RWPE1 (cell line): ENCODE measurements at regions of chr12 and their contacts with region 1.

Region 1: DNA sequence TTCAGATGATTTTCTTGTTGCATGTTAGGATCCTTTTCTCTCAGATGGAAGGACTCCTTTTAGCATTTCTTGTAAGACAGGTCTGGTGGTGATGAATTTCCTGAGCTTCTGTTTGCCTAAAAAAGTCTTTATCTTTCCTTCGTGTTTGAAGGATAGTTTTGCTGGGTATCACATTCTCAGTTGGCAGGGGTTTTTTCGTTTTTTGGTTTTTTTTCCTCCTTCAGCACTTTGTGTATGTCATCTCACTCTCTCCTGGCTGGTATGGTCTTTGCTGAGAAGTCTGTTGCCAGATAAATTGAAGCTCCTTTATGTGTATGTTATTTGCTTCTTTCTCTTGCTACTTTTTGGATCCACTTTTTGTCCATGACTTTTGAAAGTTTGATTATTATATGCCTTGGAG is 15.6 kb upstream of the TXNRD1 start:
- DNase-seq: no peak
- H3K27ac ChIP-seq: no peak overlapping the region
- CTCF ChIP-seq: no peak

Region 2: GRCh38 chr12:104166465-104166864 is 33.5 kb before region 1 on chr12:
- CTCF ChIA-PET with region 1: interaction called, 10 read pairs
- POLR2A ChIA-PET with region 1: no interaction called
- DNase-seq: no peak
- H3K27ac ChIP-seq: no peak overlapping the region
- CTCF ChIP-seq: no peak